ENCODE measurements at regions of chr9 and their contacts with region 1.

Region 1: DNA sequence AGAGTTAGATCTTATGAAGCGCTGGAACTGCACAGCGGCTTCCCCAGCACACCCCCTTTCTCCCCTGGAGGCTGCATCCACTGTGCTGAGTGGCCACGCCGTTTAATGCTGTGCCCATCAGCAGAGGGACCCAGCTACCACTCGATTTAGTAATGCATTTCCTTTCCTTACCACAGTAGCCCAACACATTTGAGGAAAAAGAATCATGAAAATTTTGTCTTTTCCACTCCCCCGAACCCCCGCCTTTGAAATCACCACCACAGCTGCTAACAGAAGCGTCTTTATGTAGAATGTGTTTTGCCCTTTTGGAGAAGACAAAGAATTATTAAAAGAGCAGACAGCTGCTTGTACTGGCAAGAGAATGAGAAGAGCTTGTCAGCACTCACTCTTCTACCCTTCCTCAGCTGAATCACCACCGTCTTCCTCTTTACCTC is 73.2 kb downstream of the ACER2 start:
- DNase-seq: no peak
- H3K4me3 Mint-ChIP-seq: no peak overlapping the region
- H3K27ac Mint-ChIP-seq: no peak overlapping the region
- H3K4me1 Mint-ChIP-seq: no peaks in the 10 kb centered on the region
- H3K27me3 Mint-ChIP-seq: no peaks in the 10 kb centered on the region

Region 2: GRCh38 chr9:19441730-19442129 is 40.3 kb before region 1 on chr9:
- CTCF ChIA-PET with region 1: no interaction called
- POLR2A ChIA-PET with region 1: no interaction called
- intact Hi-C with region 1: no loop called
- DNase-seq: no peak
- H3K4me3 Mint-ChIP-seq: peak overlapping the region; percentile 53
- H3K27ac Mint-ChIP-seq: peak overlapping the region; percentile 15
- H3K4me1 Mint-ChIP-seq: peaks cover 15% of the 10 kb centered on the region
- H3K27me3 Mint-ChIP-seq: no peaks in the 10 kb centered on the region

Region 3: GRCh38 chr9:19464764-19465585 is 17.0 kb before region 1 on chr9:
- CTCF ChIA-PET with region 1: interaction called, 33 read pairs
- POLR2A ChIA-PET with region 1: interaction called, 3 read pairs
- intact Hi-C with region 1: no loop called
- DNase-seq: peak; percentile 73
- H3K4me3 Mint-ChIP-seq: peak overlapping the region; percentile 72
- H3K27ac Mint-ChIP-seq: no peak overlapping the region
- H3K4me1 Mint-ChIP-seq: peaks cover 7% of the 10 kb centered on the region
- H3K27me3 Mint-ChIP-seq: no peaks in the 10 kb centered on the region

Region 4: GRCh38 chr9:19809401-19810269 is 327.6 kb after region 1 on chr9:
- CTCF ChIA-PET with region 1: no interaction called
- POLR2A ChIA-PET with region 1: no interaction called
- intact Hi-C with region 1: no loop called
- DNase-seq: no peak
- H3K4me3 Mint-ChIP-seq: no peak overlapping the region
- H3K27ac Mint-ChIP-seq: no peak overlapping the region
- H3K4me1 Mint-ChIP-seq: no peaks in the 10 kb centered on the region
- H3K27me3 Mint-ChIP-seq: peaks cover 10% of the 10 kb centered on the region